Activated naive CD8-positive, alpha-beta T cell treated with anti-CD3 and anti-CD28 coated beads, Interleukin-2, amount 10 ng/mL, durations not matched to agents 7 days and 5 days (primary cell): ENCODE measurements at regions of chr20 and their contacts with region 1.

Region 1: GRCh38 chr20:32819992-32820710 is 397 bp downstream of the MAPRE1 start:
- DNase-seq: peak; percentile 90
- ATAC-seq: peak; percentile 80
- H3K4me3 Mint-ChIP-seq: peak overlapping the region; percentile 96
- H3K27ac Mint-ChIP-seq: peak overlapping the region; percentile 98
- H3K4me1 Mint-ChIP-seq: peaks cover 38% of the 10 kb centered on the region
- H3K27me3 Mint-ChIP-seq: no peaks in the 10 kb centered on the region

Region 2: DNA sequence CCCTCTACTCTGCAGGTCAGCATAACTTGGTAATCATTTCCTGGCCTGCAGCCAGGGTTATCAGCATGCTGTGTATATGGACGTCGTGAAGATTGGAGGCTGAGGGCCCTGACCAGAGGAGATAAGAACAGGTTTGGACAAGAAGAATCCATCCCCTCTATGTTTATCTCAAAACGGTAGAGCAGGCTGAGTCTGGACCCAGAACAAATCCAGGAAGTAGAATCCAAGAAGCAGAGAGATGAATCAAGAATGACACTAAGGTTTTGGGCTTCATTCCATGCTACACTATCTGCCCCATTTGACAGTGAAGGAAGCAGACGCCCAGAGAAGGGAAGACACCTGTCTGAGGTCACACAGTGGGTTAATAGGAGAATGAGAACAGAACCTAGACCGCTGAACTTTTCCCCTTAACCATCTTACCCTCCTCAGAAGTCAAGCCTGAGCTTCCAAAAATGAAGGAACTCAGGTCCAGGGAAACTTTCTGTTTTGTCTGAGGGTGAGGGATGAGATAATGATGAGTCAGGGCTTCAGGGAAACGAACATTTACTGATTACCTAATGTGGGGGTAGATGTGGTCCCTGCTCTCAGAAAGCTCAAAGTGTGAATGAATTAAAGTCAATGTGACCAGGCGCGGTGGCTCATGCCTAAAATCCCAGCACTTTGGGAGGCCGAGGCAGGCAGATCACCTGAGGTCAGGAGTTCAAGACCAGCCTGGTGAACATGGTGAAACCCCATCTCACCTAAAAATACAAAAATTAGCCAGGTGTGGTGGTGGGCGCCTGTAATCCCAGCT is 67.5 kb before region 1 on chr20:
- POLR2A ChIA-PET with region 1: no interaction called
- DNase-seq: no peak
- ATAC-seq: no peak
- H3K4me3 Mint-ChIP-seq: no peak overlapping the region
- H3K27ac Mint-ChIP-seq: no peak overlapping the region
- H3K4me1 Mint-ChIP-seq: no peaks in the 10 kb centered on the region
- H3K27me3 Mint-ChIP-seq: peaks cover 2% of the 10 kb centered on the region

Region 3: GRCh38 chr20:32832664-32833063 is 12.5 kb after region 1 on chr20:
- POLR2A ChIA-PET with region 1: interaction called, 10 read pairs
- DNase-seq: peak; percentile 54
- ATAC-seq: peak; percentile 54
- H3K4me3 Mint-ChIP-seq: peak overlapping the region; percentile 75
- H3K27ac Mint-ChIP-seq: peak overlapping the region; percentile 51
- H3K4me1 Mint-ChIP-seq: peaks cover 38% of the 10 kb centered on the region
- H3K27me3 Mint-ChIP-seq: no peaks in the 10 kb centered on the region